Gastrocnemius medialis (tissue), 4 donors: ENCODE measurements at regions of chr13 and their contacts with region 1.

Region 1: DNA sequence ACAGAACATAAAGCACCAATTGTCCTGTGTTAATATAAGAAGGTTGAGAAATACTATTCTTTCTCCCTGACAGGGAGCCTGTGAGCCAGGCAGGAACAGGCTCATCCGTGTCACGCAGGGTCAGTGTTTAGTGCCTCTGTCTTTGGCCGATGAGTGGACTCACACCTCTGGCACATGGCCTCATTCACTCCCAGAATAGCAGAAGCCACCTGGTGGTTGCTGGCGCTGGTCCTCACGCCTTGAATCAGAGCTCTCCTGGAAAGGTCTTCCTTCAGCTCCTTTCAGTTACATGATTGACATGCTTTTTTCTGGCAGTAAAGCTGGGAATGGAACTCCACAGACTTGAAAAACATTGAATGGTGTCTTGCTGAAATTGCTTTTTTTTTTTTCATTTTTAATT is 28.1 kb upstream of the SIAH3 start:
- DNase-seq: peak; percentile 91 to 95
- ATAC-seq: peak; percentile 100
- H3K4me3 ChIP-seq: no peak overlapping the region
- H3K27ac ChIP-seq: peak overlapping the region; percentile 82 to 87 (median 84)
- H3K4me1 ChIP-seq: peaks cover 12 to 18% of the 10 kb centered on the region in 2 donors
- H3K27me3 ChIP-seq: no peaks in the 10 kb centered on the region
- CTCF ChIP-seq: peak; percentile 33 to 56 (median 48)
- POLR2A ChIP-seq: no peak

Region 2: DNA sequence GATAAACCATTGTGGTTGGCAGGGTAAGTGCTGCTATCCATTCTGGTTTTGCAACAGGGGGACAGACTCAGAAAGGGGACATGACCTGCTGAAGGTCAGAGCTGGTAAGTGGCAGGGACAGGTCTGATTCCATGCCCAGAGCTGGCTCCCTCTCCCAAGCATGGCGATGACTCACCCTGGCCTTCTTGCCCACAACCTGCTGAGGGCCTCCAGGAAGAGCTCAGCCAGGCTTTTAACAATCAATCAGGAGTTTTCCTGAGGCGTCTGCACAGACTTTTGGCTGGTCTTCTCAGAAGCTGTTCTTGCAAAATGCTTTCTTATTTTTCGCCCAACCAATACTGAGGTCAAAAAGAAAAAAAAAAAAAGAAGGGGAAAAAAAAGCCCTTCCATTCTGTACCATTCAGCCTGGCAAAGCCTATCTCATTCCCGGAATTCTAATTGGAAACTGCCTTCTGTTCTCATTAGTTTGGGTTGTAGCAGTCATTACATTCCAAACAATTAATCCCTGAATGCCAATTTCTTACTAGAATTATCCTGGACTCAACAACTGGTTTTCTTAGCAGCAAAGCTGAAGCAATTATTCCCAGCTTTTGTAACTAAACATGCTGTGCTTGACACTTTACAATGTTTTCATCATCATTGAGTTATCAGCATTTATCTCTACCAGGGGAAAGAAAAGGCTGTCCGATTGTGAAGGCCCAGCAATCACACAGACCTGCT is 45.9 kb before region 1 on chr13:
- in situ Hi-C with region 1: no loop called
- intact Hi-C with region 1: loop called (anchors 2 kb)
- DNase-seq: peak; percentile 69 to 84
- ATAC-seq: peak; percentile 98 to 99
- H3K4me3 ChIP-seq: no peak overlapping the region
- H3K27ac ChIP-seq: peak overlapping the region; percentile 24 to 64 (median 52)
- H3K4me1 ChIP-seq: peaks cover 5 to 6% of the 10 kb centered on the region in 2 donors
- H3K27me3 ChIP-seq: no peaks in the 10 kb centered on the region
- CTCF ChIP-seq: no peak
- POLR2A ChIP-seq: no peak

Region 3: GRCh38 chr13:46052319-46053161 is 172.9 kb after region 1 on chr13 and contains the start of gene ZC3H13:
- in situ Hi-C with region 1: no loop called
- intact Hi-C with region 1: loop called (anchors 1 kb)
- DNase-seq: peak; percentile 88 to 91
- ATAC-seq: peak; percentile 100
- H3K4me3 ChIP-seq: peak within 1 kb of the TSS; percentile 84 to 97 (median 90)
- H3K27ac ChIP-seq: peak within 1 kb of the TSS; percentile 88 to 96 (median 92)
- H3K4me1 ChIP-seq: peaks cover 27 to 28% of the 10 kb centered on the region in 2 donors
- H3K27me3 ChIP-seq: no peaks in the 10 kb centered on the region
- CTCF ChIP-seq: peak; percentile 24 to 52 (median 48)
- POLR2A ChIP-seq: peak; percentile 58 to 61
- total RNA-seq, gene ZC3H13: 14.7 to 20.7 (median 17.1) TPM